ENCODE measurements at regions of chr3 and their contacts with region 1.

Region 1: GRCh38 chr3:11211531-11212298 is 57.4 kb downstream of the HRH1 start:
- DNase-seq: no peak

Region 2: GRCh38 chr3:10142707-10143566 is 1068.8 kb before region 1 on chr3:
- intact Hi-C with region 1: no loop called
- DNase-seq: no peak

Region 3: GRCh38 chr3:10945683-10946287 is 265.9 kb before region 1 on chr3:
- intact Hi-C with region 1: loop called in 1 of 2 experiments (anchors 10 kb)
- DNase-seq: peak; percentile 89

Region 4: GRCh38 chr3:11118181-11118682 is 93.5 kb before region 1 on chr3:
- intact Hi-C with region 1: no loop called
- DNase-seq: no peak

Region 5: DNA sequence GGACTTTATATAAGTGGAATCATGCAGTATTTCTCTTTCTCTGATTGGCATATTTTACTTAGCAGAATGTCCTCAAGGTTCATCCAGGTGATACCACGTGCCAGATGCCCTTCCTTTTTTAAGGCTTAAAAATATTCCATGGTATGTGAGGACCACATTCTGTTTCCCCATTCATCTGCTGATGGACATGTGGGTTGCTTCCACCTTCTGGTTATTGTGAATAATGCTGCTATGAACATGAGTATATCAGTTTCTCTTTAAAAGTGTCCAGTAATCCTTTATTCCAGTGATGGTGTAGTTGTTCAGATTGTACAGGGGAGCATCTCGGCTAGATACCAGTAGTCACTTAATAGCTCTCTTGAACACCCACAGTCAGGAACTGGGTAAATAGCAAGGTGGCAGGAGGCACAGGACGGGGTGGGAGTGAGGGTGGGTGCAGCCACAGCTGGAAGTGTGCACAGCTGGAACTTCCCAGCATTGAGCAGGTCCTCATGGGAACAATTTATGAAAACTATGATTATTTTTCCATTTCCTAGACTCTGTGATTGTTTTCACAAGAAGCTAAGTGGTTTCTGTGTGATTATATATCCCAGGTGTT is 10.2 kb after region 1 on chr3:
- intact Hi-C with region 1: no loop called
- DNase-seq: no peak

Region 6: GRCh38 chr3:11705049-11705448 is 493.3 kb after region 1 on chr3:
- intact Hi-C with region 1: loop called in 1 of 2 experiments (anchors 5 kb)
- DNase-seq: no peak

Measured in posterior vena cava (tissue), 2 donors.